Heart right ventricle (tissue), 16 donors: ENCODE measurements at regions of chr11 and their contacts with region 1.

Region 1: DNA sequence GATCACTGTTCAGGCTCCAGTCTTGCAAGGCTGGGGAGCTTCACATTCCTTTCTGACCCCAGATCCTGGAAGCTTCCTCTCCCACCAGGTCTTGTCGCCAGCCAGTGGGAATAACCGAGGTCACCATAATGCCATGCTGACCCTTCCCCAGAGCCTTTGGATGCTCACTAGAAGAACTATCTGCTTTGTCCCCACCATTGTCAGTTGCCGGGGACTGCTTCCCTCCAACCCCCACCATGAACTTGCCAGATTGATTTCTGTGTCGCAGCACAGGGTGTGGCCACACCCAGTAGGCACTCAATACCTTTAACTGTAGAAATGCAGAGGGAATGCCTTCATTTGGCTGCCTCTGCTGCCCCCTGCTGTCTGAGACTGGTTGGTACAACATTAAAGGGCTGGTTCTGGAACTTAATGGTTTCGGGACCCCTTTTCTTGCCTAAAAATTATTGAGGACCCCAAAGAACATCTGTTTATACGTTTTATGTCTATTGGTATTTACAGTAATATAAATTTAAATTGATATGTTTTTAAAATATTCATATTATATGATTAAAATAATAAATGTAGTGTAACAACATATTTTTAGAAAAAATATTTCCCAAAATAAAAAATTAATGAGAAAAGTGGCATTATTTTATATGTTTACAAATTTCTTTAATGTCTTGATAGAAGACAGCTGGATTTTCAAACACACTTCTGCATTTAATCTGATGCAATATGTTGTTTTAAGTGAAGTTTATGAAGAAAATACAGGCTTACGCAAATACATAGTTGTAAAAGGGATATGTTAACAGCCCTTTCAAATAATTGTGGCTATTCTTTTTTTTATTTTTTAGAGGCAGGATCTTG is 6.7 kb upstream of the GDPD5 start:
- DNase-seq: peak; percentile 62 to 65
- ATAC-seq: peak in 6 of 8 donors; percentile 38 to 59 (median 48)
- H3K4me3 ChIP-seq: no peak overlapping the region
- H3K27ac ChIP-seq: no peak overlapping the region
- H3K4me1 ChIP-seq: peaks cover 0 to 21% (median 13%) of the 10 kb centered on the region in 9 donors
- H3K27me3 ChIP-seq: no peaks in the 10 kb centered on the region
- CTCF ChIP-seq: peak; percentile 85 to 97 (median 93)

Region 2: DNA sequence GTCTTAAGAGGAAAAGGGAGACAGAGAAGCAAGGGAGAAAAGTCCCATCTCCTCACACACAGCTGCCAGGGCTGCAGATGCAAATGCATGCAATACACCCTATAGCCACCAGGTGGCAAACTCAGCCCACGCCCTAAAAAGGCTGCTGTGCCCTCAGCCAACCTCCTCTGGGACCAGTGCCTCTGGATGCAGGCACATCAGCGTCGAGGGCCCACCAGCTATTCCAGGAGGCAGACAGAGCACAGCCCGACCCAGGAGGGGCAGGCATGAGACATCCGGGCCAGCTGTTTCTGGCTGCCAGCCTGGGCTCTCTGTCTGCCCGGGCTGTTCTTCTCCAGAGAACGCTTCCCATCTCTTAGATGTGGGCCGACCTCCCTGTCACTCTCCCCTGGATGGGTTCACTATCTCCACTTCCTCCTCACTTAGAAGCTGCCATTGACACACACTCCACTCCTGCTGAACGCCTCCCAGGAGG is 252.2 kb before region 1 on chr11:
- intact Hi-C with region 1: loop called in 6 of 10 experiments (anchors 10 kb)
- DNase-seq: peak; percentile 66 to 84
- ATAC-seq: peak; percentile 60 to 88 (median 82)
- H3K4me3 ChIP-seq: no peak overlapping the region
- H3K27ac ChIP-seq: peak overlapping the region in 8 of 10 donors; percentile 1 to 58 (median 21)
- H3K4me1 ChIP-seq: peaks cover 0 to 28% (median 19%) of the 10 kb centered on the region in 9 donors
- H3K27me3 ChIP-seq: no peaks in the 10 kb centered on the region
- CTCF ChIP-seq: peak; percentile 96 to 99 (median 98)

Region 3: GRCh38 chr11:75394085-75394840 is 138.2 kb before region 1 on chr11:
- intact Hi-C with region 1: loop called in 8 of 10 experiments (anchors 2 to 5 kb)
- DNase-seq: no peak
- ATAC-seq: no peak
- H3K4me3 ChIP-seq: no peak overlapping the region
- H3K27ac ChIP-seq: no peak overlapping the region
- H3K4me1 ChIP-seq: peaks cover 0 to 3% (median 0%) of the 10 kb centered on the region in 9 donors
- H3K27me3 ChIP-seq: no peaks in the 10 kb centered on the region
- CTCF ChIP-seq: no peak

Region 4: GRCh38 chr11:75406338-75406777 is 126.1 kb before region 1 on chr11:
- intact Hi-C with region 1: loop called in 4 of 10 experiments (anchors 2 to 5 kb)
- DNase-seq: no peak
- ATAC-seq: no peak
- H3K4me3 ChIP-seq: no peak overlapping the region
- H3K27ac ChIP-seq: no peak overlapping the region
- H3K4me1 ChIP-seq: peaks cover 4 to 44% (median 18%) of the 10 kb centered on the region in 9 donors
- H3K27me3 ChIP-seq: no peaks in the 10 kb centered on the region
- CTCF ChIP-seq: no peak

Region 5: DNA sequence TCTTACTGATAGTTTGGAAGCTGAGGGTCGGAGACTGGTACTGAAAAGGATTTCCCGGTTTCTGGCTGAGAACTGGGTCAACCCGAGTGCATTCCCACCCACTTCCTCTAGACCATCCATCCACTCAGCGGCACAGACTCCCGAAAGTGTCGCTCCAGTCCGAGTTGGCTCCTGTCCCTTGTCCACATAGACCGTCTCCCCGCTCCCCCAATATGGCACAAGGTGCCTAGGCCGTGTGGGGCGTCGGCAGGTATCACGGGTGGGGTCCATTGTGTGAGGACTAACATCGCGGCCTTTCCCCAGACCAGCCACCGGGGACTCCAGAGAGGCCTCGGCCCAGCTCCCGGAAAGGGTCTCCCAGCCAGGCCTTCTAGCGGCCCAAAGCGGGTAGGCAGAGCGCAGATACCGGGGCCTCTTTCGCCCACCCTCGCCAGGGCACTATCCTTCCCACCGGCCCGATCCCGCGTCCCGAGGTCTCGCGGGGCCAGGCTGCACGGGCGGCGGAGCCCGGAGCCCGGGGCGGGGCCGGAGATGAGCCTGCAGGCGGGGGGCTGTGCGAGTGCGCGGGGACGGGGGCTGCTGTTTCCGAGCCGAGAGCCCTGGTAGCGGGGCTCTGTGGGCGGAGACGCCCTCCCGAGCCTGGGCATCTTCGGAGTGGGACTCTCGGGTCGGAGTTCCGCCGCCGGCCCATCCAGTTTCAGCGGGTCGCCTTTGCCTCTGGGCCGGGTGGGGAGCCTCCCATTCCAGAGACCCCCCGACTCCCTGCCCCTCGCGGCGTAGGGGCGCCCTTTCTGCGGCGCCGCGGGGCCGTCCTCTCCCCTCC is 50.7 kb after region 1 on chr11:
- intact Hi-C with region 1: no loop called
- DNase-seq: peak; percentile 66 to 68
- ATAC-seq: peak; percentile 68 to 93 (median 88)
- H3K4me3 ChIP-seq: peak overlapping the region; percentile 81 to 98 (median 88)
- H3K27ac ChIP-seq: peak overlapping the region; percentile 98 to 100 (median 98)
- H3K4me1 ChIP-seq: peaks cover 5 to 39% (median 25%) of the 10 kb centered on the region in 9 donors
- H3K27me3 ChIP-seq: no peaks in the 10 kb centered on the region
- CTCF ChIP-seq: peak in 6 of 9 donors; percentile 30 to 55 (median 42)